Activated CD8-positive, alpha-beta T cell treated with anti-CD3 and anti-CD28 coated beads, Interleukin-2, amount 10 ng/mL, durations not matched to agents 7 days and 5 days (primary cell): ENCODE measurements at regions of chr22 and their contacts with region 1.

Region 1: DNA sequence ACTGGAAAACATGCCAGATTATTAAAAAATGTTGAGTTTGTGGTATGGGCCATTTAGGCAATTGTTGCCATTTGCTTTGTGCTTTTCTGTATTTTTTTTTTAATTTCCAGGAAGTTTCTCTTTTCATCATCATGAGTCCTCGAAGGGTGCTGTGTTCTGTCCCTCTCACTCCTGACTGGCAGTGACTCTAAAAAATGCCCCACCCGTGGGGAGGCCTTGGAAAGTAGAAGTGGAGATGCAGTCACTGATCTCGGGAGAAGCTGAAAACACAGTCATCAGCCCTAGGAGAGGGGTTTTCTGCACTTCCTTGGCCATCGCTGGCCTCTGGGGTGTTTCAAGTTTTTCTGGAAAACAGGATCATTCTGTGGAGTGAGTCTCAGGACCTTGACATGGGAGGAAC is 98.5 kb upstream of the GRK3 start:
- DNase-seq: no peak
- ATAC-seq: no peak
- H3K4me3 Mint-ChIP-seq: no peak overlapping the region
- H3K27ac Mint-ChIP-seq: peak overlapping the region; percentile 15
- H3K4me1 Mint-ChIP-seq: peaks cover 13% of the 10 kb centered on the region
- H3K27me3 Mint-ChIP-seq: no peaks in the 10 kb centered on the region

Region 2: DNA sequence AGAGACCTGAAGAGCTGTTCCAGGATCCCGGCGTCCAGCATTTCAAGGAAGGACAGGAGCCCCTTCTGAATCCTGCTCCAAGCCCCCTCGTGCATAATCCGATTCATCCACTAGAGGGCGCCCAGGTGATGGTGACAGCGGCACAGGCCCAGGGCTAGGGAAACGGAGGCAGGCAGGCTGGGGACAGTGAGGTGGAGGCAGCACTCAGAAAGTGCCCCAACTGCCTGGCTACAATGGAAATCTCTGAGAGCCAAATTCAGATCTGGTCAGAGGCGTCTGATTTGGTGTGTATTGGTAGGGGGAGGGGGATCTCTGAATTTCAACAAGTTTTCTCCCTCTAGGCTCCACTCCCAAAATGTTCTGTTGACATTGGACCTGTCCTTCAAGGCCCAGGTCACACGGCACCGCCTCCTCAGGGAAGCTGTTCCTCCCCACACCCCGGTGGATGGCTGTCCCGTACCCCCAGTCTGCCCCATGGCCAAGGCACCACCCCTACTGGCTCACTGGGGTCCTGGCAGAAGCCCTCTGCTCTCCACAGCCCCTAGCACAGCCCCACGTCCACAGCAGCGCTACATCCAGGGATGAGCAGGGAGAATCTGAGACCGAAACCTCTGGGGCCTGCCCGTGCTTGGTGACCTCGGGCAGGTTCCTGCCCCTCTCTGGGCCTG is 103.6 kb before region 1 on chr22:
- CTCF ChIA-PET with region 1: no interaction called
- POLR2A ChIA-PET with region 1: no interaction called
- DNase-seq: peak; percentile 81
- ATAC-seq: peak; percentile 66
- H3K4me3 Mint-ChIP-seq: no peak overlapping the region
- H3K27ac Mint-ChIP-seq: peak overlapping the region; percentile 67
- H3K4me1 Mint-ChIP-seq: peaks cover 4% of the 10 kb centered on the region
- H3K27me3 Mint-ChIP-seq: no peaks in the 10 kb centered on the region

Region 3: GRCh38 chr22:25508161-25508560 is 42.2 kb after region 1 on chr22:
- CTCF ChIA-PET with region 1: no interaction called
- POLR2A ChIA-PET with region 1: no interaction called
- DNase-seq: no peak
- ATAC-seq: no peak
- H3K4me3 Mint-ChIP-seq: no peak overlapping the region
- H3K27ac Mint-ChIP-seq: no peak overlapping the region
- H3K4me1 Mint-ChIP-seq: no peaks in the 10 kb centered on the region
- H3K27me3 Mint-ChIP-seq: no peaks in the 10 kb centered on the region

Region 4: GRCh38 chr22:25534724-25535123 is 68.8 kb after region 1 on chr22:
- CTCF ChIA-PET with region 1: no interaction called
- POLR2A ChIA-PET with region 1: no interaction called
- DNase-seq: no peak
- ATAC-seq: no peak
- H3K4me3 Mint-ChIP-seq: no peak overlapping the region
- H3K27ac Mint-ChIP-seq: no peak overlapping the region
- H3K4me1 Mint-ChIP-seq: peaks cover 3% of the 10 kb centered on the region
- H3K27me3 Mint-ChIP-seq: peaks cover under 1% of the 10 kb centered on the region

Region 5: GRCh38 chr22:25702040-25702439 is 236.1 kb after region 1 on chr22:
- CTCF ChIA-PET with region 1: interaction called, 27 read pairs
- POLR2A ChIA-PET with region 1: no interaction called
- DNase-seq: no peak
- ATAC-seq: no peak
- H3K4me3 Mint-ChIP-seq: peak overlapping the region; percentile 9
- H3K27ac Mint-ChIP-seq: peak overlapping the region; percentile 70
- H3K4me1 Mint-ChIP-seq: peaks cover 51% of the 10 kb centered on the region
- H3K27me3 Mint-ChIP-seq: no peaks in the 10 kb centered on the region

Region 6: GRCh38 chr22:25840167-25840566 is 374.2 kb after region 1 on chr22:
- CTCF ChIA-PET with region 1: no interaction called
- POLR2A ChIA-PET with region 1: no interaction called
- DNase-seq: no peak
- ATAC-seq: no peak
- H3K4me3 Mint-ChIP-seq: no peak overlapping the region
- H3K27ac Mint-ChIP-seq: no peak overlapping the region
- H3K4me1 Mint-ChIP-seq: no peaks in the 10 kb centered on the region
- H3K27me3 Mint-ChIP-seq: no peaks in the 10 kb centered on the region